GM12878 (cell line): ENCODE measurements at regions of chr17 and their contacts with region 1.

Region 1: GRCh38 chr17:48351831-48352332 is 78.1 kb downstream of the SKAP1 start:
- DNase-seq: no peak
- ATAC-seq: peak; percentile 27; the same call in 2 of the 3 replicates
- H3K4me3 ChIP-seq: no peak overlapping the region
- H3K27ac ChIP-seq: no peak overlapping the region
- H3K4me1 ChIP-seq: no peaks in the 10 kb centered on the region
- H3K27me3 ChIP-seq: no peaks in the 10 kb centered on the region
- CTCF ChIP-seq: peak; percentile 39 to 66 (median 53); a peak in 5 of 6 replicates
- EP300 ChIP-seq: no peak
- POLR2A ChIP-seq: no peak
- RAD21 ChIP-seq: peak; percentile 86

Region 2: DNA sequence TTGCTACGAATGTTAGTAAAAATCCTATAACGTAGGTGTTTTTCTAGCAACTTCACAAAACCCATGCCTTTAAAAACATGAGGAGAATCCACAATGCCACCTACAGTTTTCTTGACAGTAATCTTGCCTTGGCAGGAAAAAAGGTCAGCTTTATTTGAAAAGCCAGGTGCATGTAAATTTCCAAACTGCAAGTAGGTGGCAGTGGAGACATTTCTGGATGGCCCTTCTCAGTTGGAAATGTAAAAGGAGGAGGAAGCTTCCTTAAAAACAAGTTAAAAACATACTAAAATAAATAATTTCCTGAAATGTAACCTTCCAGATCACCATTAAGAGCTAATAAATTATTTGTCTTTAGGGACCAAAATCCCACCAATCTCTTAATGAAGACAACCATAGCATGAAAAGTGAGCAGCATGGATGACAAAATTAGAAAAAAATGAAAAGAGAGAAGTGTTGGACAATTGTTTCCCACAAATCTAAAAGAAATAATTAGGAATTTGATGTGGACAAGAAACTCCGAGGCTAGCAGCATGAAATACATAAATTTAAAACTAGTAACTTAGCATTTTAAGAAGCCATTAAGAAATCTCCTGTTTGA is 92.1 kb before region 1 on chr17:
- CTCF ChIA-PET with region 1: interaction called, 23 read pairs
- POLR2A ChIA-PET with region 1: interaction called, 3 read pairs
- RAD21 ChIA-PET with region 1: interaction called, 8 read pairs
- SMC1A ChIA-PET with region 1: interaction called, 6 read pairs
- in situ Hi-C with region 1: no loop called
- intact Hi-C with region 1: no loop called
- DNase-seq: no peak
- ATAC-seq: no peak
- H3K4me3 ChIP-seq: no peak overlapping the region
- H3K27ac ChIP-seq: no peak overlapping the region
- H3K4me1 ChIP-seq: no peaks in the 10 kb centered on the region
- H3K27me3 ChIP-seq: no peaks in the 10 kb centered on the region
- CTCF ChIP-seq: peak; percentile 47 to 62 (median 61)
- EP300 ChIP-seq: no peak
- POLR2A ChIP-seq: no peak
- RAD21 ChIP-seq: peak; percentile 77

Region 3: DNA sequence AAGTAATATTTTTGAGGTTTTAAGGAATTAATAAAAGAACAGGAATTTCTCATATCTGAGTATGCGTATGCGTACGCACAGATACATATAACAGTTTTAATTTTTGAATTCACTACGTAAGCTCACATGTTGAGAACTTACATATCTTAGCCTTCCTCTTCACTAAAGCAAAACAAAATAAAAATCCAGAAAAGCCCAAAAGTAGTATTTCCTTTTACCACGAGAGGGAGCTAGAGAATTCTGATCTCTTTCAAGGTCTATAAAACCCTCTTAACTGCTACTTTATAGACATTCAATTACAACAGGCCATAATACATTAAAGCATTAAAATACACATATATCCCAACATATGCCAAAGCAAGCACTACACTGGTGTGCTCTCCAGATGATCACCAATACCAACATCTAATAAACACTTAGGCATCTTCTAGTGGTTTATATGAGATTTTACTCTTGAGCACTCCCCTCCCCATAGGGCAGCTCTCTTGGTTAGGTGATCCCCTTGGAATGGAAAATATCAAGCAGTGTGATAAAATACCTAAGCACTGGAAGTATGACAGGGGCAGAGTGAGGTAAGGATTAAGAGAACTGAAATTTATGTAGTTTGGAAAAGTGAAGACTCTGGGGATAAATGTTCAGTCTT is 15.9 kb before region 1 on chr17:
- CTCF ChIA-PET with region 1: interaction called, 67 read pairs
- POLR2A ChIA-PET with region 1: interaction called, 3 read pairs
- RAD21 ChIA-PET with region 1: interaction called, 35 read pairs
- SMC1A ChIA-PET with region 1: interaction called, 40 read pairs
- in situ Hi-C with region 1: no loop called
- intact Hi-C with region 1: no loop called
- DNase-seq: peak; percentile 37
- ATAC-seq: peak; percentile 75
- H3K4me3 ChIP-seq: no peak overlapping the region
- H3K27ac ChIP-seq: no peak overlapping the region
- H3K4me1 ChIP-seq: peaks cover 10% of the 10 kb centered on the region; the same call in 1 of the 2 replicates
- H3K27me3 ChIP-seq: no peaks in the 10 kb centered on the region
- CTCF ChIP-seq: peak; percentile 59 to 72 (median 65)
- EP300 ChIP-seq: no peak
- POLR2A ChIP-seq: no peak
- RAD21 ChIP-seq: peak; percentile 79

Region 4: GRCh38 chr17:48374650-48375230 is 22.9 kb after region 1 on chr17:
- CTCF ChIA-PET with region 1: interaction called, 25 read pairs
- POLR2A ChIA-PET with region 1: no interaction called
- RAD21 ChIA-PET with region 1: interaction called, 14 read pairs
- SMC1A ChIA-PET with region 1: interaction called, 5 read pairs
- in situ Hi-C with region 1: no loop called
- intact Hi-C with region 1: no loop called
- DNase-seq: no peak
- ATAC-seq: peak; percentile 92
- H3K4me3 ChIP-seq: no peak overlapping the region
- H3K27ac ChIP-seq: no peak overlapping the region
- H3K4me1 ChIP-seq: no peaks in the 10 kb centered on the region
- H3K27me3 ChIP-seq: no peaks in the 10 kb centered on the region
- CTCF ChIP-seq: peak; percentile 21 to 64 (median 54); a peak in 5 of 6 replicates
- EP300 ChIP-seq: no peak
- POLR2A ChIP-seq: no peak
- RAD21 ChIP-seq: peak; percentile 63

Region 5: DNA sequence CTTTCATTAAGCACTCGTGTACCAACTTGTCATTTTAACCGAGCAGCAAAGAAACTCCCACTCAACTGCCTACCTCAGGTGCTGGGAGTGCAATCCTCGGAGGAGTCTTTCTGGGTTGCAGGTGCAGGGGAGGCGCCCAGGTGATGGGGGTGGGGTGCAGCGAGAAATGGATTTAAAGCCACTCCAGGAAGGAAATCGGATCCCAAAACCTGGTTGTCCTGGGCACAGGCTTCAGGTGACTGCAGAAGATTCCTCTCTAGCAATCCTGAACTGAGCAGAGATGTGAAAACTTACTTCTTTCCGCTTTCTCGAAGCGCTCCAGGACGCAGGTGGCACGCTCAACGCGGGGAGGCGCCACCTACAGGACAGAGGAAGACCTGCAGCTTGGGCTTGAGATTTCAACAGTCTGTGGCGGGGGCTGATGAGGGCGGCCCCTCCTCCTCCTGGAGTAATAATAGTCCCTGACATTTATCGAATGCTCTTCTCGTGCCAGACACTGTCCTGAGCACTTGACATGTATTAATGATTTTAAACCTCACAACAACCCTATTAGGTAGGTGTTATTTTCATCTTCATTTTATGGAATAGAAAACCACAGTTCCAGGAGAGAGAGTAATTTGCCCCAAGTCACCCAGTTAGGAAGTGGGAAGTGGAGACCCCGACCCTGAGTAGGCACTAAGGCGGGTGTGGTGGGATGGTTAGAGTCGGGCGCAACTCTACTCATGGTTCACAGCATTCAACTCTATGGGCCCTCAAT is 105.4 kb after region 1 on chr17:
- CTCF ChIA-PET with region 1: interaction called, 89 read pairs
- POLR2A ChIA-PET with region 1: interaction called, 3 read pairs
- RAD21 ChIA-PET with region 1: interaction called, 47 read pairs
- SMC1A ChIA-PET with region 1: interaction called, 59 read pairs
- in situ Hi-C with region 1: loop called (anchors 5 kb)
- intact Hi-C with region 1: loop called (anchors 1 kb)
- DNase-seq: no peak
- ATAC-seq: peak; percentile 93
- H3K4me3 ChIP-seq: peak overlapping the region; percentile 2; the same call in 1 of the 2 replicates
- H3K27ac ChIP-seq: no peak overlapping the region
- H3K4me1 ChIP-seq: peaks cover 34% of the 10 kb centered on the region
- H3K27me3 ChIP-seq: no peaks in the 10 kb centered on the region
- CTCF ChIP-seq: peak; percentile 96; a peak in 5 of 6 replicates
- EP300 ChIP-seq: no peak
- POLR2A ChIP-seq: no peak
- RAD21 ChIP-seq: peak; percentile 96

Region 6: DNA sequence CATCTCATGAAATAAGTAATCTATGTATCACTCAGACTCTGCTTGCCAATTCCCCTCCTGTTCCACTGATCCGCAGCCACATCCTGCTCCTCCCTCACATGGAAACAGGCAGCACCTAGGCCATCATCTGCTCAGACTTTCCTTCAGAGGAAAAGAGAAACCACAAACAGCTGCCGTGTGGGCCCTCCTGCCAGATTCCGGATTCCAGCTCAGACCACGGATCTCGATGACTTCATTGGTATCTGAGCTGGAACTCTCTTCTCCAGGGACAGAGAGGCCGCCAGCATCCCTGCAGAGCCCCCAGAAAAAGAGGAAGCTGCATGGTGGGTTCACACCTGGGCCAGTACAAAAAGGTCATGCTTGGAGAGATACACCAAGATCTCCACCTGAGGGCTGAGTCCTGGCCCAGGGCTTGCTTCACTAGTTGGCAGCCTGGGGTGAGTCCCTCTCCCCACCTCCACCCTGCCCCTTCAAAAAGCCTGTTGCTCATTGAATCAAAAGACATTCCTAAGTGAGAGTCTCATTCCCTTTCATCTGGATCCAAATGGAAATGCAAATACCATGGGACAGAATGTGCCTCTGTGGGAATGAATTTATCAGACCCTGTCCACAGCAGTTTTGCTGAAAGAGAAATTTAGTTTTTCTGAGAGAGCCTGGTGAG is 131.7 kb after region 1 on chr17:
- CTCF ChIA-PET with region 1: interaction called, 13 read pairs
- POLR2A ChIA-PET with region 1: no interaction called
- RAD21 ChIA-PET with region 1: no interaction called
- SMC1A ChIA-PET with region 1: interaction called, 7 read pairs
- in situ Hi-C with region 1: no loop called
- intact Hi-C with region 1: no loop called
- DNase-seq: no peak
- ATAC-seq: peak; percentile 87
- H3K4me3 ChIP-seq: no peak overlapping the region
- H3K27ac ChIP-seq: no peak overlapping the region
- H3K4me1 ChIP-seq: peaks cover 19% of the 10 kb centered on the region
- H3K27me3 ChIP-seq: no peaks in the 10 kb centered on the region
- CTCF ChIP-seq: no peak
- EP300 ChIP-seq: no peak
- POLR2A ChIP-seq: no peak
- RAD21 ChIP-seq: no peak

Region 7: DNA sequence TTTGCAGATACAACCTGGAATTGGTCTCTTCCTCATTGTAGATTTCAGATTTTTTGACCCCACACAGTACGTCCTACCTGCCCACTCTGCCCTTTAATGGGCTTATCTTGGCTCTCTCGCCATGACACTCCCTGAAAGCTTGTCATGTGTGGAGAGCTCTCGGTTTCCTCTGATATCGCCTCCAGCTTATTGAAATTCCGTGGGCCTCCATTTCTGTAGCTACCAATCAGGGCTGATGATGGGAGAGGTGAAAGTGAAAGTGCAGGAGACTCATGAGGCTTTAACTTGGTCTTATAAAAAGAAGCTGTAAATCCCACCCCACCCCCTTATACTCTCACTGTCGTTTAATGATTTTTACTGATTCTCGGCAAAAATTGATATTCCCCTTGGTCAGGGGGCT is 161.2 kb after region 1 on chr17:
- CTCF ChIA-PET with region 1: interaction called, 7 read pairs
- POLR2A ChIA-PET with region 1: no interaction called
- RAD21 ChIA-PET with region 1: interaction called, 11 read pairs
- SMC1A ChIA-PET with region 1: interaction called, 7 read pairs
- in situ Hi-C with region 1: no loop called
- intact Hi-C with region 1: no loop called
- DNase-seq: no peak
- ATAC-seq: peak; percentile 53
- H3K4me3 ChIP-seq: peak overlapping the region; percentile 34; the same call in 1 of the 2 replicates
- H3K27ac ChIP-seq: peak overlapping the region; percentile 54
- H3K4me1 ChIP-seq: peaks cover 56% of the 10 kb centered on the region
- H3K27me3 ChIP-seq: no peaks in the 10 kb centered on the region
- CTCF ChIP-seq: no peak
- EP300 ChIP-seq: no peak
- POLR2A ChIP-seq: no peak
- RAD21 ChIP-seq: no peak